Activated T-helper 1 cell treated with anti-CD3 and anti-CD28 coated beads, Interleukin-12 subunit alpha, Interleukin-12 subunit beta, Interleukin-2, Interleukin-4 antibody, amounts not matched to agents 30 ng/mL and 10 ng/mL and 1 ng/mL, durations not matched to agents 14 hours and 24 hours and 36 hours (primary cell): ENCODE measurements at regions of chr15 and their contacts with region 1.

Region 1: GRCh38 chr15:61584410-61584809 is 355.3 kb upstream of the RORA start:
- DNase-seq: no peak
- H3K4me3 Mint-ChIP-seq: no peak overlapping the region
- H3K27ac Mint-ChIP-seq: no peak overlapping the region
- H3K4me1 Mint-ChIP-seq: no peaks in the 10 kb centered on the region
- H3K27me3 Mint-ChIP-seq: no peaks in the 10 kb centered on the region

Region 2: DNA sequence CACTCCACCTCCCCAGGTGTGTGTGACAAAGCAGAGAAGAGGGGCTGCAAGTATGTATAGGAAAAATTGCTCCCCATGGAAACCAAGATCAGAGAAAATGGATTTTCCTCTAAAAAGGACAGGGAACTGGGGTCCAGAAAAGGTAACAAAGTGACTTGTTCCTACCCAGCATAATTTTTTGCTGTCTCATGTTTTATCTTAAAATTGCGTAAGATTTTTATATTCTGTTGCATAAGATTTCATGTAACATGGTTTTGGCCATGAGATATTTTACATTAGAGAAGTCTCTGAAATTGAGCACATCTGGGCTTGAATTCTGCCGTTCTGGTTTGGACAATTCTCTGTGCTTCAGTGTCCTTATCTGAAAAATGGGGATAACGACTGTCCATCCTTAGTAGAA is 19.6 kb before region 1 on chr15:
- intact Hi-C with region 1: loop called (anchors 1 kb)
- DNase-seq: no peak
- H3K4me3 Mint-ChIP-seq: no peak overlapping the region
- H3K27ac Mint-ChIP-seq: no peak overlapping the region
- H3K4me1 Mint-ChIP-seq: no peaks in the 10 kb centered on the region
- H3K27me3 Mint-ChIP-seq: peaks cover 9% of the 10 kb centered on the region

Region 3: DNA sequence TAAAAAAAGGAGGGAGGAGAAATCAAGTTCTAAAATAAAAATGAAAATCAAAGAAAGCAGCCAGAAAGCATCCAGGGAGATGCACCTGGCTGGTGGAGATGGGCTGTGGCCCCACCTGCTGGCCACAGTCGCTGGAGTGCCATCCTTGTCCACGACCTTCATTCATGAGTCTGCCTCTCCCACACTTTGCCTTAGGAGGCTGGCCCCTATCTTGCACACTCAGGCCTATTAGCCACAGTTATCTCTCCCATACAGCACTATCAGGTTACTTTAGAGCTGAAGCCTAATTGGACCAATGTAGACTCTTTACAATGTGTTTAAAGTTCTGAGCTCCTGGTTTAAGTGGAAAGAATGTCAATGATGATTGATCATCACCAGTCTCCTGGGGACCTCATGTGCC is 36.7 kb after region 1 on chr15:
- intact Hi-C with region 1: no loop called
- DNase-seq: no peak
- H3K4me3 Mint-ChIP-seq: no peak overlapping the region
- H3K27ac Mint-ChIP-seq: no peak overlapping the region
- H3K4me1 Mint-ChIP-seq: no peaks in the 10 kb centered on the region
- H3K27me3 Mint-ChIP-seq: no peaks in the 10 kb centered on the region

Region 4: DNA sequence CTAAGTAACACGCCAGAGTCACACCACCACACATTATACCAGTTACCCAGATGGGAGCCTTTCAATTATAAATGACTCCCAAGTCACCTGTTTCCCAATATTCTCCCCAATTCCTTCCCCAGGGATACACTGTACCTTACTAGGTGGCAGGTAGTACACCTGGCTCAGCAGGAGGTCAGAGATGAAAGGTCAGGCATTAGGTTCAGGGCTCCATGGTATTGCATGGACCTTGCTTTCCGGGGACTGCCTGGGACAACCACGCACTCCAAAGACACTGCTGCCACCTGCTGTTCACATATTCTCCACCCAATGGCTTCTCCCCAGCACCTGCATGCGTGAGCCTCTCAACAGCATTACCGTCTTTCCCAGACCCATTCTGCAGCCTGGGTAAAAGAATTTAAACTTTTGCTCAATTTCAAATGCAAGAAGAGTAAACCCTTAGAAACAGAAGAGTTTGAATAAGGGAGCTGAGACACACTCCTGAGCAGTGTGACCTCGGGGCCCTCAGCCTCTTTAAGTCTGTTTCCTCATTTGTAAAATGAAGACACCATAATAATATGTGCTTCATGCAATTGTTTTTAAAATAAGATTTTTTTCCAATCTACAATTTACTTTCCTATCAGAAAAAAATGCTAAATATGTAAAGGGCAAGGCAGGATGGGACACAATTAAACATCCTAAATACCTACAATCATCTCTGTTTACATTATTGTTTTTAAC is 1509.2 kb after region 1 on chr15:
- intact Hi-C with region 1: no loop called
- DNase-seq: peak; percentile 56
- H3K4me3 Mint-ChIP-seq: no peak overlapping the region
- H3K27ac Mint-ChIP-seq: no peak overlapping the region
- H3K4me1 Mint-ChIP-seq: peaks cover 5% of the 10 kb centered on the region
- H3K27me3 Mint-ChIP-seq: peaks cover 4% of the 10 kb centered on the region